Panc1 (cell line): ENCODE measurements at regions of chr1 and their contacts with region 1.

Region 1: DNA sequence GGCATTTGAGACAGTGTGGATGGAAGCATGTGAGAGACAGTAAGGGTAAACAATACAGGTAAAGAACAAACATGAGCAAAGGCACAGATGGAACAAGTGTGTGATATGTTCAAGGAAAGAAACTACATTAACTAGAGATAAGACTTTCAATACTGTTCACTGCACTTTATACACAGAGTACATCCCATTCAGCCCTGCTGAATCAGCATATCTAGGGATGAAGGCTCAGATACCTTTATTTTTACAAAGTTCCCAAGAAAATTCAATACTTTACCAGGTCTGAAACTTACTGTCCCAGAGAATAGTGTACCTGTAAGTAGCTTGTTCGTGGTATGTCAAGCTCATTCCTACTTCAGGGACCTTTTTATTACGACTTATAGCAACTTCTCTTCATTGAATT is 122.5 kb downstream of the LHX4 start:
- DNase-seq: no peak
- ATAC-seq: no peak
- H3K4me3 ChIP-seq: no peak overlapping the region
- H3K27ac ChIP-seq: no peak overlapping the region
- H3K4me1 ChIP-seq: no peaks in the 10 kb centered on the region; the same call in 1 of the 2 replicates
- H3K27me3 ChIP-seq: no peaks in the 10 kb centered on the region
- CTCF ChIP-seq: no peak

Region 2: GRCh38 chr1:179984942-179985341 is 367.6 kb before region 1 on chr1:
- CTCF ChIA-PET with region 1: no interaction called
- POLR2A ChIA-PET with region 1: no interaction called
- in situ Hi-C with region 1: no loop called
- intact Hi-C with region 1: no loop called
- DNase-seq: no peak
- ATAC-seq: no peak
- H3K4me3 ChIP-seq: no peak overlapping the region
- H3K27ac ChIP-seq: no peak overlapping the region
- H3K4me1 ChIP-seq: no peaks in the 10 kb centered on the region
- H3K27me3 ChIP-seq: no peaks in the 10 kb centered on the region
- CTCF ChIP-seq: no peak

Region 3: GRCh38 chr1:180382317-180383115 is 29.9 kb after region 1 on chr1:
- CTCF ChIA-PET with region 1: no interaction called
- POLR2A ChIA-PET with region 1: no interaction called
- in situ Hi-C with region 1: no loop called
- intact Hi-C with region 1: no loop called
- DNase-seq: no peak
- ATAC-seq: no peak
- H3K4me3 ChIP-seq: no peak overlapping the region
- H3K27ac ChIP-seq: no peak overlapping the region
- H3K4me1 ChIP-seq: no peaks in the 10 kb centered on the region
- H3K27me3 ChIP-seq: no peaks in the 10 kb centered on the region
- CTCF ChIP-seq: no peak

Region 4: DNA sequence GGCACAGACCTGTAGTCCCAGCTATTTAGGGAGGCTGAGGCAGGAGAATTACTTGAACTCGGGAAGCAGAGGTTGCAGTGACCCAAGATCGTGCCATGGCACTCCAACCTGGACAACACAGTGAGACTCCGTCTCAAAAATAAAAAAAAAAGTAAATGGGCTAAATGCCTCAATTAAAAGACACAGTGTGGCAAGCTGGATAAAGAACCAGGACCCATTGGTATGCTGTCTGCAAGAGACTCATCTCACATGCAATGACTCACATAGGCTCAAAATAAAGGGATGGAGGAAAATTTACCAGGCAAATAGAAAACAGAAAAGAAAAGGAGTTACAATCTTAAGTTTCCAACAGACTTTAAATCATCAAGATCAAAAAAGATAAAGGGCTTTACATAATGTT is 109.5 kb after region 1 on chr1:
- CTCF ChIA-PET with region 1: no interaction called
- POLR2A ChIA-PET with region 1: interaction called, 13 read pairs
- in situ Hi-C with region 1: no loop called
- intact Hi-C with region 1: no loop called
- DNase-seq: no peak
- ATAC-seq: no peak
- H3K4me3 ChIP-seq: no peak overlapping the region
- H3K27ac ChIP-seq: no peak overlapping the region
- H3K4me1 ChIP-seq: no peaks in the 10 kb centered on the region
- H3K27me3 ChIP-seq: no peaks in the 10 kb centered on the region
- CTCF ChIP-seq: no peak